Colonic mucosa (tissue), 4 donors: ENCODE measurements at regions of chr5 and their contacts with region 1.

Region 1: DNA sequence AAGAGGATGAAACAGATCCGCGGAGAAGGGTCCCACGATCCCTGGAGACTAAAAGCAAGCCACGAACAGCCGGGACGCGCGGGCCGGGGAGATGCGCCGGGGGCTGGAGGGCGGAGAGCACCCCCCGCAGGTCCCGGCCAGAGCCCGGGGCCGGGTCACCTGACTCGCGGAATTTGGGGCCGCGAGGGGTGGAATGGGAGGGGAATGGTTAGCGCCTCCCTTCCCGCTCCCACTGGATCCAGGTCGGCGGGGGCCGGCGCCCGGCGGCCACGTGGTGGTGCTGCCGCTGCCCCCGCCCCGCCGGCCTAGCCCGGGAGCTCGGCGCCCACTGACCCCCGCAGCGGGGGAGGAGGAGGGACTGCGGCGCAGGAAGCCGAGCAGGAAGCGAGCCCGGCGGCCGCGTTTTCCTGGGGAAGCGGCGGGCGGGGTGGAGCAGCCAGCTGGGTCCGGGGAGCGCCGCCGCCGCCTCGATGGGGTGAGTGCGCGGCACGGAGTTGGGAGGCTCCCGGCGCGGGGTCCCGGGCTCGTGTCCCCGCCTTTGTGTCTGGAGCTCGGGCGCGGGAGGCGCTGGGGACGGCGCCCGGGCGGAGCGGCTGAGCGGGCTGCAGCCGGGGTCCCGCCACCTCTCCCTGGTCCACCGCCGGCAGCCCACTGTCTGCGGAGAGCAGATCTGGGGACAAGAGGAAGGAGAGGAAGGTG is at the start of gene RAI14:
- DNase-seq: peak; percentile 74
- H3K4me3 ChIP-seq: peak within 1 kb of the TSS; percentile 68
- H3K27ac ChIP-seq: peak within 1 kb of the TSS; percentile 82
- H3K4me1 ChIP-seq: peaks cover 6% of the 10 kb centered on the region
- H3K27me3 ChIP-seq: no peaks in the 10 kb centered on the region
- CTCF ChIP-seq: no peak
- total RNA-seq, gene RAI14: 15.9 to 25.7 TPM

Region 2: DNA sequence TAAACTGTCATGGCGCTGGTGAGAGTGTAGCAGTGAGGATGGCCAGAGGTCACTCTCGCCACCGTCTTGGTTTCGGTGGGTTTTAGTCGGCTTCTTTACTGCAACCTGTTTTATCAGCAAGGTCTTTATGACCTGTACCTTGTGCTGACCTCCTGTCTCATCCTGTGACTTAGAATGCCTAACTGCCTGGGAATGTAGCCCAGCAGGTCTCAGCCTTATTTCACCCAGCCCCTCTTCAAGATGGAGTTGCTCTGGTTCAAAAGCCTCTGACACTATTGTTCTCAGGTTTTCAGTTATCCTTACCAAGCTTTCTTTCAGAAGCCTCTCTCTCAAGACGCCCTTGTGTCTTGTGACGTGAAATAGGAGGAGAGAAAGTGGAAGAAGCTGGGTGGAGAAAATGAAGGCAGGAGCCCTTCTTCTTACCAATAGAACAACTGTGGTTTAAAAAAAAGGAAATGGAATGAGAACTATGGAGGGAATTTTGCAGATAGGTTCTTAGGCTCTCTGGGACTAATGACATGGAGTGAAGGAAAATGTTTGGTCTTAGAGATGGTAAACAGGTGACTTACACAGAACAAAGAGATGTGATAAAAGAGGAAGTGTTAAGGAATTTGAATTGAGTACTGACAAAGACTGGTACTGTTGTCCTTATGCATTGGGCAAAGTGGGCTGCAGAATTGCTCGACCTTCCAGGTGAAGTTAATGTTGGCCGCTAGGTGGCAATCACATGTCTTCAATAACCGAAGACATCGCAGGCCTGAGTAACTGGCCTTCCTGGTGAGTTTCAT is 133.4 kb before region 1 on chr5:
- intact Hi-C with region 1: loop called (anchors 10 kb)
- DNase-seq: peak; percentile 74
- H3K4me3 ChIP-seq: no peak overlapping the region
- H3K27ac ChIP-seq: no peak overlapping the region
- H3K4me1 ChIP-seq: no peaks in the 10 kb centered on the region
- H3K27me3 ChIP-seq: no peaks in the 10 kb centered on the region
- CTCF ChIP-seq: peak; percentile 46

Region 3: GRCh38 chr5:34838785-34839714 is 182.9 kb after region 1 on chr5 and contains the start of gene TTC23L:
- intact Hi-C with region 1: loop called (anchors 10 kb)
- DNase-seq: peak; percentile 91
- H3K4me3 ChIP-seq: peak within 1 kb of the TSS; percentile 84
- H3K27ac ChIP-seq: peak within 1 kb of the TSS; percentile 48
- H3K4me1 ChIP-seq: no peaks in the 10 kb centered on the region
- H3K27me3 ChIP-seq: no peaks in the 10 kb centered on the region
- CTCF ChIP-seq: no peak
- total RNA-seq, gene TTC23L: 0.35 TPM in 1 of 2 donors, not detected in the other

Region 4: DNA sequence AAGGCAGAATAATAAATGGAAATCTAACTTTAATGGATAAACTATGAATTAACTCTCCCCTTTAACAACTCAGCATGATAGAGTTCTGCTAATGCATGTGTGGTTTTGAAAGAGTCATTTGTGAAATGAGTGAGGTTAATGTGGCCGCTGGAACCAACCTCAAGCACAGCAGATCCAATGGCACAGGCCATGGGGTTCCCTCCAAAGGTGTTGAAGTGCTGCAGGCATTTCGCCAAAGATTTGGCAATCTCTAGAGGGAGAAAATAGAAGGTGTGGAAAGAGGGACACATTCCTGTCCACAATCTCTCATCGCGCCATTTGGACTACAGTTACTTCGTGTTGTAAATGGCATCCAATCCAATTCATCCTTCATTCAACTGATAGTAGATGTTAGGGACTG is 356.6 kb after region 1 on chr5:
- intact Hi-C with region 1: no loop called
- DNase-seq: no peak
- H3K4me3 ChIP-seq: no peak overlapping the region
- H3K27ac ChIP-seq: no peak overlapping the region
- H3K4me1 ChIP-seq: no peaks in the 10 kb centered on the region
- H3K27me3 ChIP-seq: no peaks in the 10 kb centered on the region
- CTCF ChIP-seq: no peak

Region 5: DNA sequence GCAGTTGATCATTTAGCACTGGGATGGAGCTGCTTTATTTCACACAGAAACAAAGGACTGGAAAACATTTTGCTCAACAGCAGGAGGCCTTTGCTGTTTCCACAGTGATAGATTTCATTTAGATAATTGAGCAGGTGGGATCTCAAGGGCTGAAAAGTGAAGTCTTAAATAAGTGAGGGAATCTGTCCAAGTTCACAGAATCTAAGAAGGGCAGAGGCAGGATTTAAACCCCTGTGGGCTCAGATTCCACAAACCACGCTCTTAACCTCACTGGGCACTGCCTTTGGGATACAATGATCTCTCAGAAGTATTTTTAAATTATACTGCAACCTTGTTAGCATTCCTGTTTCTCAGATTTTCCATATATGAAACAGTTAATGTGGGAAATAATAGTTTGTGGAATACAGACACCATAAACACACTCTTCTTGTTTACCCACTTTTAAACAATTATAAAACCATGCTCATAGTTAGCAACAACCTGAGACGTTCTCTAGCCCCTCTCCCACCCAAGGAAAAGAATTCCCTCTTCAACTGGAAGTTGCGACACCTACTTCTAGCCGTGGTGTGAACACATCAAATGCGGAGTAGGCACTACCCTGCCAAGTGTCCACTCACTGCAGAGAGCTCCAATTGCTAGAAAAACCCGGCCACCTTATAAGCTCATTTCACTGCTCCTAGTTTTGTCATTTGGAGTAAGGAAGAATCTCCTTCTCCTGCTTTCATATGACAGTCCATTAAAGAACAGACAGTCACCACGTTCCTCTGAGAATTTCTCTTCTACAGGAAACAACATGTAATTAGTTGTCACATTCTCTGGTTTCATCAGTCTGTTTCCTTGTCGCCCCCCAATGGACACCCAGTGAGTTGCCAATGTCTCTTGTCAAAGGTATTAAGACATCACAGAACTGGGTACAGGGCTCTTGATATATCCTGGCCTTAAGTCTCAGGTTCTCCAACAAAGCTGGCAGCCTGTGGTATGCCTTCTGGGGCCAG is 526.7 kb after region 1 on chr5:
- intact Hi-C with region 1: no loop called
- DNase-seq: peak; percentile 59
- H3K4me3 ChIP-seq: no peak overlapping the region
- H3K27ac ChIP-seq: no peak overlapping the region
- H3K4me1 ChIP-seq: no peaks in the 10 kb centered on the region
- H3K27me3 ChIP-seq: no peaks in the 10 kb centered on the region
- CTCF ChIP-seq: peak; percentile 39